BJ (cell line): ENCODE measurements at regions of chr12 and their contacts with region 1.

Region 1: GRCh38 chr12:65372574-65372973 is 94.1 kb downstream of the MSRB3 start:
- DNase-seq: no peak
- H3K4me3 ChIP-seq: no peak overlapping the region
- H3K27me3 ChIP-seq: no peaks in the 10 kb centered on the region
- CTCF ChIP-seq: no peak

Region 2: GRCh38 chr12:65510584-65511050 is 138.0 kb after region 1 on chr12:
- CTCF ChIA-PET with region 1: no interaction called
- POLR2A ChIA-PET with region 1: no interaction called
- DNase-seq: no peak
- H3K4me3 ChIP-seq: no peak overlapping the region
- H3K27me3 ChIP-seq: no peaks in the 10 kb centered on the region
- CTCF ChIP-seq: no peak

Region 3: DNA sequence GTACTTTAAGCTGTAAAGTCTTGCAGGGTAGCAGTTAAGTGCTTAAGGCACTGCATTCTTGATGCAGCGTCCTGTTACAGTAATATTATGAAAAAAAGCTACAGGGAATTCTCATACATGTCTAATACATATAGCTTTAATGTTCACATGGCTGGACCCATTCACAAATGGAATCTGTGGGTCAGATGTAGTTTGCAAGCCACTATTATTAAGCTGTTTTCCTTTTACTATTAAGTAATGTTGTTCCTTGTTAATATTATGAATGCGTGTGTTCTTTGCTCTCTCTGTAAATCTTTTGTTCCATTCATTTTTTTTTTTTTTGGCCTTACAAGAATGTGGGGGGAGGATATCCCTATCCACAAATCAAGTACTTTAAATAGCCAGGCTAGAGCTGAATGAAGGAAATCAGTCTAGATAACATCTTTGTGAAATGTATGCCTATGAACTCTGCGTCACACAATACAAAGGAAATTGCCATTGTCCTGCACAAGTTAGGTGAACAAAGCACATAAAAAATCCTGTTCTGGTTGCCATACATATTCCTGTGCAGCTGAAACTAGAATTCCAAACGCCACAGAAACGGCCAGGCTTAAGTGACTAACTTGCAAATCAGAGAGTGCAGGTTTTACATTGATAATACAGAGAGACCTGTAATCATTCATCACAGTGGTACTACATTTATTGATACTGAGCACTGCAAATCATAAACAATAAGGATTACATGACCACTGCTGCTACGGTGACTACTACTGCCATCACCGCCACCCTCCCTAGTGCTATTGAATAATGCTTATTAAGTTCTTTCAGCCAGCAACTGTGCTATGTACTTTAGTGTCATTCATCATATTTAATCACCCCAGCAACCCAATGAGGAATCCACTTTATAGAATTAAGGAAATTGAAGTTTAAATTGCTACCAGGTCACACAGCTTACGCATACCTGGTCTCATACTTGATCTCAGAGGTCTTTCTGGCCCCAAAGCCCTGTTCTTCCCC is 563.6 kb after region 1 on chr12:
- CTCF ChIA-PET with region 1: no interaction called
- POLR2A ChIA-PET with region 1: interaction called, 11 read pairs
- DNase-seq: no peak
- H3K4me3 ChIP-seq: no peak overlapping the region
- H3K27me3 ChIP-seq: no peaks in the 10 kb centered on the region
- CTCF ChIP-seq: no peak